B cell (primary cell): ENCODE measurements at regions of chr2 and their contacts with region 1.

Region 1: DNA sequence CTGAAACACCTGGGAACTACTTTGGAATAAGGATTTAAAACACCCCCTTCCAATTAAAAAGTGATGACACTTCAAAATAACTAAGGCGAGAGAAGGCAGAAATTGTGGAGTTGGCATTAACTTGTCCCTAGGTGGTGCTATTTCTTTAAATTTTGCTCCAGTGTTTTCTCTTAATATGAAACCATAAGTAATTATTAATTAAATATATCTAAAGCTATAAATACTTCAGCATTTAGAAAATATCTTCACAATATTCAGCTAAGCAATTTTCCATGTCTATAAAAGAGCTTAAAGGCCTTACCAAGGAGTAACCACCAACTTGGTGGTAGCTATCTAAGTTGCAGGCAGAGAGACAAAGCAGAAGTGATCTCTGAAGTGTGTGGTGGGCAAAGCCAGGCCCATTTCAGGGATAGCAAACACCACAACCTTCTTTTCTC is 186.8 kb upstream of the PGAP1 start:
- DNase-seq: peak; percentile 68
- ATAC-seq: peak; percentile 71
- H3K4me3 ChIP-seq: no peak overlapping the region
- H3K4me3 Mint-ChIP-seq: no peak overlapping the region
- H3K27ac ChIP-seq: peak overlapping the region in 1 of 2 donors; percentile 44
- H3K27ac Mint-ChIP-seq: peak overlapping the region; percentile 76
- H3K4me1 ChIP-seq: peaks cover 26 to 31% of the 10 kb centered on the region in 2 donors
- H3K4me1 Mint-ChIP-seq: peaks cover 33% of the 10 kb centered on the region
- H3K27me3 ChIP-seq: no peaks in the 10 kb centered on the region
- H3K27me3 Mint-ChIP-seq: no peaks in the 10 kb centered on the region
- CTCF ChIP-seq: peak; percentile 87

Region 2: GRCh38 chr2:197097578-197098366 is 15.5 kb before region 1 on chr2:
- CTCF ChIA-PET with region 1: interaction called, 14 read pairs
- POLR2A ChIA-PET with region 1: no interaction called
- intact Hi-C with region 1: no loop called
- DNase-seq: no peak
- ATAC-seq: no peak
- H3K4me3 ChIP-seq: no peak overlapping the region
- H3K4me3 Mint-ChIP-seq: no peak overlapping the region
- H3K27ac ChIP-seq: no peak overlapping the region
- H3K27ac Mint-ChIP-seq: peak overlapping the region; percentile 28
- H3K4me1 ChIP-seq: no peaks in the 10 kb centered on the region
- H3K4me1 Mint-ChIP-seq: no peaks in the 10 kb centered on the region
- H3K27me3 ChIP-seq: no peaks in the 10 kb centered on the region
- H3K27me3 Mint-ChIP-seq: no peaks in the 10 kb centered on the region
- CTCF ChIP-seq: no peak

Region 3: GRCh38 chr2:197152451-197153228 is 39.3 kb after region 1 on chr2:
- CTCF ChIA-PET with region 1: interaction called, 328 read pairs
- POLR2A ChIA-PET with region 1: interaction called, 4 read pairs
- intact Hi-C with region 1: no loop called
- DNase-seq: peak; percentile 89
- ATAC-seq: peak; percentile 87
- H3K4me3 ChIP-seq: peak overlapping the region; percentile 4 to 40 (median 29)
- H3K4me3 Mint-ChIP-seq: peak overlapping the region; percentile 74
- H3K27ac ChIP-seq: peak overlapping the region; percentile 93
- H3K27ac Mint-ChIP-seq: peak overlapping the region; percentile 90
- H3K4me1 ChIP-seq: peaks cover 81 to 88% of the 10 kb centered on the region in 2 donors
- H3K4me1 Mint-ChIP-seq: peaks cover 79% of the 10 kb centered on the region
- H3K27me3 ChIP-seq: no peaks in the 10 kb centered on the region
- H3K27me3 Mint-ChIP-seq: no peaks in the 10 kb centered on the region
- CTCF ChIP-seq: peak; percentile 69

Region 4: GRCh38 chr2:197179744-197180498 is 66.6 kb after region 1 on chr2:
- CTCF ChIA-PET with region 1: interaction called, 328 read pairs
- POLR2A ChIA-PET with region 1: no interaction called
- intact Hi-C with region 1: no loop called
- DNase-seq: no peak
- ATAC-seq: no peak
- H3K4me3 ChIP-seq: no peak overlapping the region
- H3K4me3 Mint-ChIP-seq: no peak overlapping the region
- H3K27ac ChIP-seq: no peak overlapping the region
- H3K27ac Mint-ChIP-seq: peak overlapping the region; percentile 38
- H3K4me1 ChIP-seq: peaks cover 23 to 32% of the 10 kb centered on the region in 2 donors
- H3K4me1 Mint-ChIP-seq: peaks cover 59% of the 10 kb centered on the region
- H3K27me3 ChIP-seq: no peaks in the 10 kb centered on the region
- H3K27me3 Mint-ChIP-seq: no peaks in the 10 kb centered on the region
- CTCF ChIP-seq: no peak

Region 5: DNA sequence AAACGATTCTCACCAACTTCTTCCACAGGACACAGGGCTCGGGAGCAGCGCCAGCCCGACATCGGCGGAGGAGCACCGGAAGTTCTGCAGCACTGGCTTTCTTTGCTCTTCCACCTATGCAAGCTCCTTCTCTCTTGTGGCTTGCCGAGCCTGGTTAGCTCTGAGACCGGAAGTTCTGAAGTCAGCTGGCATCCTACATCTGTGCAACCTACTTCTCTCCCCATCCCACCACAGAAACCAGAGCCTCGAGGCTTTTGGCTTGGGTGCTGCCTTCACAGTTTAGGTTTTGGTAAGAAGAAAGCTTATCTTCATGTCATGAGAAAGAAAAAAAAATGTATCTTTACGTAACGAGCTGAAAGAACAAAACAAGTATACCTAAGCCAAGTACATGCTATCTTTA is 85.6 kb after region 1 on chr2:
- CTCF ChIA-PET with region 1: interaction called, 50 read pairs
- POLR2A ChIA-PET with region 1: no interaction called
- intact Hi-C with region 1: no loop called
- DNase-seq: peak; percentile 93
- ATAC-seq: peak; percentile 96
- H3K4me3 ChIP-seq: peak overlapping the region; percentile 30 to 60 (median 57)
- H3K4me3 Mint-ChIP-seq: peak overlapping the region; percentile 93
- H3K27ac ChIP-seq: peak overlapping the region; percentile 68 to 86
- H3K27ac Mint-ChIP-seq: peak overlapping the region; percentile 97
- H3K4me1 ChIP-seq: peaks cover 68 to 71% of the 10 kb centered on the region in 2 donors
- H3K4me1 Mint-ChIP-seq: peaks cover 84% of the 10 kb centered on the region
- H3K27me3 ChIP-seq: no peaks in the 10 kb centered on the region
- H3K27me3 Mint-ChIP-seq: no peaks in the 10 kb centered on the region
- CTCF ChIP-seq: no peak

Region 6: DNA sequence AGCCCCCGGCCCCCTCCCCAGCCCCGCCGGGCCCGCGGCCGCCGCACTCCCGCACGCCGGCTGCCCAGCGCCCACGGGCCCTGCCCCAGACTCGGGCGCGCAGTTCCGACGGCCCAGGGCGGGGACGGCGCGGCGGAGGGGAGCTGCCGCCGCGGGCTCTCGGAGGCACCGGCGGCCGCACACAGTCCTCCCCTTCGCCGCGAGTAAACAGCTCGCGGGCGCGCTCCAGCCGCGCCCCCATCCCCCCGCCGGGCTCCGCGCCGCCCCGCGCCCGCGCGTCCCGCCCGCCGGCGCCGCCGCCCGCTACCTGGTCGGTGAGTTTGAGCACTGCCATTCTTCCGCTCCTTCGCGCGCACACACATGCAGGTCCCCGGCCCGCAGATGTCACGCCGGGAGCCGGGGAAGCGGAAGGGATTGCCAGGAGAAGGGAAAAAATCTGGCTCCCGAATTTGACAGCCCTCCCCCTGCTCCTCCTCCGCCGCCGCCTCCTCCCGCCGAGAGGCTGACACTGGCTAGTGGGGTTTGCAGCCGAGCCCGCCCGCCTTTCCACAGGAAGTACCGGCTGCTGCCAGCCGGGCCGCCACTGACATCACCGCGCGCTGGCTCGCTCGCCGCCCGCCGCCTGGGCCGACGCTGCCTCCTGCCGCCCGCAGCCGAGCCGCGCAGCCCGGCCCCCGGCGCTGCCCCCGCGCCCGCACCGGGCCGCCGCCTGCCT is 197.1 kb after region 1 on chr2 and contains the start of gene ANKRD44:
- CTCF ChIA-PET with region 1: interaction called, 105 read pairs
- POLR2A ChIA-PET with region 1: interaction called, 4 read pairs
- intact Hi-C with region 1: loop called (anchors 1 kb)
- DNase-seq: peak; percentile 94
- ATAC-seq: peak; percentile 78
- H3K4me3 ChIP-seq: peak within 1 kb of the TSS; percentile 73 to 97 (median 92)
- H3K4me3 Mint-ChIP-seq: peak within 1 kb of the TSS; percentile 97
- H3K27ac ChIP-seq: peak within 1 kb of the TSS; percentile 80 to 86
- H3K27ac Mint-ChIP-seq: peak within 1 kb of the TSS; percentile 95
- H3K4me1 ChIP-seq: peaks cover 34 to 35% of the 10 kb centered on the region in 2 donors
- H3K4me1 Mint-ChIP-seq: peaks cover 44% of the 10 kb centered on the region
- H3K27me3 ChIP-seq: no peaks in the 10 kb centered on the region
- H3K27me3 Mint-ChIP-seq: no peaks in the 10 kb centered on the region
- CTCF ChIP-seq: peak; percentile 34
- total RNA-seq, gene ANKRD44: 450 and 457 TPM in 2 replicates

Region 7: GRCh38 chr2:197383823-197384222 is 270.5 kb after region 1 on chr2:
- CTCF ChIA-PET with region 1: interaction called, 58 read pairs
- POLR2A ChIA-PET with region 1: interaction called, 4 read pairs
- intact Hi-C with region 1: no loop called
- DNase-seq: no peak
- ATAC-seq: no peak
- H3K4me3 ChIP-seq: no peak overlapping the region
- H3K4me3 Mint-ChIP-seq: no peak overlapping the region
- H3K27ac ChIP-seq: no peak overlapping the region
- H3K27ac Mint-ChIP-seq: no peak overlapping the region
- H3K4me1 ChIP-seq: no peaks in the 10 kb centered on the region
- H3K4me1 Mint-ChIP-seq: peaks cover 4% of the 10 kb centered on the region
- H3K27me3 ChIP-seq: peaks cover 0 to 1% (median 0%) of the 10 kb centered on the region in 4 experiments
- H3K27me3 Mint-ChIP-seq: no peaks in the 10 kb centered on the region
- CTCF ChIP-seq: no peak

Region 8: DNA sequence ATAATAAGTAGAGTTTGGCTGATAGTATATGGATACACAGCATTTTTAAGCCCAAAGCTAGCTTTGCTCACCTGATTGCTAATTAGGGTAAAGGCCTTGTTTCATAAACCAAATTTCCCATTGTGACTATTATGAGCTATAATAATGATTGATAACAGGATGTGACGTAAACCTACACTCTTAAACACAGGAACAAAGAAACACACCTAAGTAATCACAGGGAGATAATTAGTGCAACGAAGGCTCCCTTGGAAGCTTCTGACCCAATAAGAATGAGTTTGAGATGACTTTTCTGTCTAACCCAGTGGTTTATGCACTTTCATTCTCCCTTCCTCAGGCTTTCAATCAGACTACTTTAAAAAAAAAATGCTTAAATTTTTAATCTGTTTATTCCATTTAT is 1661.3 kb after region 1 on chr2:
- CTCF ChIA-PET with region 1: no interaction called
- POLR2A ChIA-PET with region 1: no interaction called
- intact Hi-C with region 1: no loop called
- DNase-seq: no peak
- ATAC-seq: no peak
- H3K4me3 ChIP-seq: no peak overlapping the region
- H3K4me3 Mint-ChIP-seq: no peak overlapping the region
- H3K27ac ChIP-seq: no peak overlapping the region
- H3K27ac Mint-ChIP-seq: no peak overlapping the region
- H3K4me1 ChIP-seq: no peaks in the 10 kb centered on the region
- H3K4me1 Mint-ChIP-seq: no peaks in the 10 kb centered on the region
- H3K27me3 ChIP-seq: no peaks in the 10 kb centered on the region
- H3K27me3 Mint-ChIP-seq: no peaks in the 10 kb centered on the region
- CTCF ChIP-seq: no peak